PC-3 (cell line): ENCODE measurements at regions of chr3 and their contacts with region 1.

Region 1: GRCh38 chr3:151660885-151661284 is 72.8 kb upstream of the AADACL2 start:
- DNase-seq: peak; percentile 56
- ATAC-seq: no peak
- H3K4me3 ChIP-seq: no peak overlapping the region
- H3K27ac ChIP-seq: no peak overlapping the region
- H3K4me1 ChIP-seq: no peaks in the 10 kb centered on the region
- H3K27me3 ChIP-seq: no peaks in the 10 kb centered on the region
- CTCF ChIP-seq: peak; percentile 61

Region 2: DNA sequence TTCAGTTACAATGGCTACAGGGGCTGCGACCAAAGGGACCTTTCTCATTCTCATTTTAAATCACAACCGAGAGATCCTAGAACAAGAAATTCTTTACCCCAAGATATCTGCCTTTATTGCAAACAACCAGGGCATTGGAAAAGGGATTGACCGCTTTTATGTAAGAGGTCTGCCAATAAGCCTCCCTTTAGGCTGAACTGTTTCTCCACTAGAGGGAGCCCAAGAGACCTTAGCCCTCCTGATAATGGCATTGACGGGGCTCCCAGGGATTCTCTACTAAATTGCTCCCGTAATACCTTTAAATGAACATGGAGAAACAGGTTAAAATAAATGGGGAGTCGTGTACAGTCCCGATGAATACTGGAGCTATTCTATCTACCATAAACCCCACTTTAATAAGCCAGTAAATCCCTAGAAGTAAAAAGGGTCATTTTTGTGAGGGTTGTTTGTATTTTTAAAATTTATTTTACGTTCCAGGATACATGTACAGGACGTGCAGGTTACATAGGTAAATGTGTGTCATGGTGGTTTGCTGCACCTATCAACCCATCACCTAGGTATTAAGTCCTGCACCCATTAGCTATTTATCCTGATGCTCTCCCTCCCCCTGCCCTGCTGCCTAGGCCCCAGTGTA is 192.5 kb before region 1 on chr3:
- CTCF ChIA-PET with region 1: interaction called, 3 read pairs
- POLR2A ChIA-PET with region 1: no interaction called
- intact Hi-C with region 1: loop called (anchors 1 kb)
- DNase-seq: peak; percentile 90
- ATAC-seq: peak; percentile 98
- H3K4me3 ChIP-seq: no peak overlapping the region
- H3K27ac ChIP-seq: no peak overlapping the region
- H3K4me1 ChIP-seq: no peaks in the 10 kb centered on the region
- H3K27me3 ChIP-seq: no peaks in the 10 kb centered on the region
- CTCF ChIP-seq: peak; percentile 93